ENCODE measurements at regions of chr19 and their contacts with region 1.

Region 1: GRCh38 chr19:39381910-39382611 is 8.8 kb downstream of the PAF1 start:
- DNase-seq: no peak
- H3K4me3 ChIP-seq: no peak overlapping the region
- H3K27ac ChIP-seq: no peak overlapping the region
- H3K4me1 ChIP-seq: no peaks in the 10 kb centered on the region
- H3K27me3 ChIP-seq: no peaks in the 10 kb centered on the region
- CTCF ChIP-seq: no peak
- POLR2A ChIP-seq: no peak

Region 2: GRCh38 chr19:39347332-39348164 is 34.5 kb before region 1 on chr19:
- intact Hi-C with region 1: loop called in 1 of 2 experiments (anchors 5 kb)
- DNase-seq: peak in 1 of 7 donors; percentile 23
- H3K4me3 ChIP-seq: no peak overlapping the region
- H3K27ac ChIP-seq: peak overlapping the region in 2 of 5 donors; percentile 36 to 40
- H3K4me1 ChIP-seq: peaks cover 8 to 58% of the 10 kb centered on the region in 2 donors
- H3K27me3 ChIP-seq: no peaks in the 10 kb centered on the region
- CTCF ChIP-seq: no peak
- POLR2A ChIP-seq: peak in 1 of 2 donors; percentile 18

Measured in adrenal gland (tissue), 19 donors.